Activated CD4-positive, alpha-beta memory T cell treated with anti-CD3 and anti-CD28 coated beads for 36 hours (primary cell): ENCODE measurements at regions of chr6 and their contacts with region 1.

Region 1: DNA sequence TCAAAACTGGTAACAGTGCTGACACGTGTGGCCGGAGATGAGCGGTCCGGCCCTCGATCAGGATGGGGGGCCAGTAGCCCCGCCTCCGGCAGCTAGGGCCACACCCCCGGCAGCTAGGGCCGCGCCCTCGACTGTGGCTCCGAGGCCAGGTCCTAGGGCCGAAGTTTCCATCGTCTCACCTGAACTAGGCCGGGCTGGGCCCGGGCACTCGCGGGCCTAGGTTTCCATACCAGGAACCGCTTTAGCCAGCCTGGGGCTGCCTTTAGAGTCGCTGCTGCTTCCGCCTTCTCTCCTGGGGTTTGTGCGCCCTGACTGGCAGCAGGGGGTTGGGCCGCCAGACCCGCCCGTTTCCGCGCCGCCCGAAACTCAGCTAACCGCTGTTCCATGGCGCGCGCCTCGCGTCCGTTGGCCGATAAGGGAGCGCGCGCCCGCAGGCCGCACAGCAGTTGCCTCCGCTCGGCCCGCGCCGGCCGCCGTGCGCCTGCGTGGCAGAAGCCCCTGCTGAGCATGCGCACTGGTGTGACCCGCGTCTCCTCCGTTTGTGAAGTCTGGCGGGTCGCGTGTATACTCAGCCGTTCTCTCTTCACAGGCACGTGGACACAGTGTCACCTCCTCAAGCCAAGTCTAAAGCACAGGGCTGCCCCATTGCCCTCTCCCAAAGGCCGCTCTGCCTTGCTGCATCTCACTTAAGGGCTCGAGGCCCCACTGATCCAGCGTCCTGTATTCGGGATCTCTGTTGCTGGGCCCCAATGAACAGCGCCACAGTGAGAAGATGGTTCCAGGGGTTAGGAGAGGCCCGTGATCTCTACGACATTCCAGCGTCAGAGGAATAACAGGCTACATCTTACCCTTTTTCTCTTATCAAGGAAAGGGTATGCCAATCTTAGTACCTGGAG is at the start of gene SAYSD1:
- DNase-seq: peak; percentile 95
- H3K4me3 Mint-ChIP-seq: peak within 1 kb of the TSS; percentile 95
- H3K27ac Mint-ChIP-seq: peak within 1 kb of the TSS; percentile 96
- H3K4me1 Mint-ChIP-seq: peaks cover 56% of the 10 kb centered on the region
- H3K27me3 Mint-ChIP-seq: no peaks in the 10 kb centered on the region
- total RNA-seq, gene SAYSD1: 12.3 to 12.9 TPM

Region 2: GRCh38 chr6:37819177-37819823 is 1295.7 kb before region 1 on chr6 and contains the start of gene ZFAND3:
- CTCF ChIA-PET with region 1: no interaction called
- POLR2A ChIA-PET with region 1: no interaction called
- intact Hi-C with region 1: loop called (anchors 5 kb)
- DNase-seq: peak; percentile 96
- H3K4me3 Mint-ChIP-seq: peak within 1 kb of the TSS; percentile 92
- H3K27ac Mint-ChIP-seq: peak within 1 kb of the TSS; percentile 93
- H3K4me1 Mint-ChIP-seq: peaks cover 52% of the 10 kb centered on the region
- H3K27me3 Mint-ChIP-seq: no peaks in the 10 kb centered on the region
- total RNA-seq, gene ZFAND3: 35.1 to 36.4 TPM

Region 3: GRCh38 chr6:38973178-38974054 is 141.5 kb before region 1 on chr6:
- CTCF ChIA-PET with region 1: no interaction called
- POLR2A ChIA-PET with region 1: no interaction called
- intact Hi-C with region 1: loop called (anchors 1 kb)
- DNase-seq: peak; percentile 13
- H3K4me3 Mint-ChIP-seq: no peak overlapping the region
- H3K27ac Mint-ChIP-seq: no peak overlapping the region
- H3K4me1 Mint-ChIP-seq: peaks cover 2% of the 10 kb centered on the region
- H3K27me3 Mint-ChIP-seq: peaks cover 13% of the 10 kb centered on the region

Region 4: DNA sequence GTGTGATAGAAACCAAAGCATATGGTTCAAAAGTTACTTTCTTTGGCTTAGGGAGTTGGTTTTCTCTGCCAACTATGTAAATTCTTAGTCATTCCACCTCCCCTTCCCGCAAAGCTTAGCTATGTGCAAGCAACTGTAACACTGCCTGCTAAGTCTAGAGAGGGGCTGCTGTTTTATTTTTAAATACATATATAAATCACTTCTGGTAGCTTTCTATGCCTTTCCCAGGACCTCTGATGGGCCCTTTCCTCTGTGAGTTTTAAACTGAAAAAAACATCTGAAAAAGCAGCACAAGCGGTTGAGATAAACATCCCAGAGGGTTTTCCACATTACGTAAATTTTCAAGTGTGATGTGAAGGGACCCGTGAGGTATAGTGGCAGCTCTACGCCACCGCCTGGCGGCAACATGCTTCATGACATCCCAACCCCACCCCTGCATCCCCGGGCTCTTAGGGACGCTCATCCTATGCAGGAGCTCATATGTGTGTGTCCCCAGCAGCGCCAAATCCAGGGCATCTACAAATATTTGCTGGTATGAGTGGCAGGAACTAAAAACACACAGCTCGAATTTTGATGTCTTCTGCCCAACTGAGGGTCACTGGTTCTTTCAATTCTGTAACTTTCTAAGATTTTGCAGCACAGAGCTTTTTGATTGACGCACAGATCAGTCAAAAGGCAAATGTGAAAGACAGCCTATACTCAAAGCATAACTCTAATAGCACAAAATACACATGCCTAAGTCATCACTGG is 12.7 kb before region 1 on chr6:
- CTCF ChIA-PET with region 1: no interaction called
- POLR2A ChIA-PET with region 1: interaction called, 3 read pairs
- intact Hi-C with region 1: loop called (anchors 1 kb)
- DNase-seq: peak; percentile 31
- H3K4me3 Mint-ChIP-seq: no peak overlapping the region
- H3K27ac Mint-ChIP-seq: no peak overlapping the region
- H3K4me1 Mint-ChIP-seq: peaks cover 11% of the 10 kb centered on the region
- H3K27me3 Mint-ChIP-seq: no peaks in the 10 kb centered on the region

Region 5: DNA sequence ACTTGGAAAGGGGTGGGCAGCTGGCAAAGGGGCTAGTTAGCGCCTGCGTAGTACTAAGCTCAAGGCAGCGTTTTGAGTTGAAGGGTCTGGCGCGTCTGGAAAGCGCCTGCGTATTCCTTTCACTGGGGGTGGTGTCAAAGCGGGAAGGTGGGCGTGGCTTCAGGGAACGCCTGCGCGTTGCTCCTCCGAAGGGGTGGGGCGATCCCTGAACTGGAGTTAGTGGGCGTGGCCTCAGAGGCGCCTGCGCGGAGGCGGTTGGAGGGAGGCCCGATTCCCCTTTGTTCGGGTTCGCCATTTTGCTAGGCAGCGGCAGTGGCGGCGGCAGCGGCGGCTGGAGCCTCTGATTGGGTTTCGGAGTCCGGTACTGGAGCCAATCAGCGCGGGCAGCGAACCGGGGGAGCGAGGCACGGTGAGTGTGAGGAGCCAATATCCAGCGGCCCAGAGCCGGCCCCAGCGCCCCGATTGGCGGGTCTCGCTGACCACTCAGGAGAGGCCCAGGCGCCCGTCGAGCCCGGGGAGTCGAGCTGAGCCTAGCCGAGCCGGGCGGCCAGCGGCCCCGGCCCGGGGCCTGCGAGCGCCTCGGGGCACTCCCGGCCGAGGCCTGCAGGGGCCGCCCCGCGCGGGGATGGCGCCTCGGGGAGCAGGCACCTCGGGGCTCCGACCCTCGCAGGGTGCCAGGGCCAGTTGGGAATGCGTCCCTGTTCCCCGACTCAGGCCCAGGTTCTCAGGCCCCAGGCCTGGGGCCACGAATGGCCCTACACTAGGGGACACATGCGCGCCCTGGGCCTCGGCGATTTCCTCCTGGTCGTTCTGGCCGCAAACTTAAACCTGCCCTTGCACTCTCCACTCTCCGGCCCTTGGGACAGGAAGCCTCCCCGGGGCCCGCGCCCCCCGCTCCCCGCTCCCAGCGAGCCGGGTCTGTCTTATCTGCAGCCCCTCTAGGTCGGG is 1958.0 kb after region 1 on chr6 and contains the start of gene NFYA:
- CTCF ChIA-PET with region 1: no interaction called
- POLR2A ChIA-PET with region 1: no interaction called
- intact Hi-C with region 1: loop called (anchors 2 kb)
- DNase-seq: peak; percentile 100
- H3K4me3 Mint-ChIP-seq: peak within 1 kb of the TSS; percentile 93
- H3K27ac Mint-ChIP-seq: peak within 1 kb of the TSS; percentile 98
- H3K4me1 Mint-ChIP-seq: peaks cover 52% of the 10 kb centered on the region
- H3K27me3 Mint-ChIP-seq: no peaks in the 10 kb centered on the region
- total RNA-seq, gene NFYA: 30.2 to 30.4 TPM